MCF 10A (cell line): ENCODE measurements at regions of chr16 and their contacts with region 1.

Region 1: DNA sequence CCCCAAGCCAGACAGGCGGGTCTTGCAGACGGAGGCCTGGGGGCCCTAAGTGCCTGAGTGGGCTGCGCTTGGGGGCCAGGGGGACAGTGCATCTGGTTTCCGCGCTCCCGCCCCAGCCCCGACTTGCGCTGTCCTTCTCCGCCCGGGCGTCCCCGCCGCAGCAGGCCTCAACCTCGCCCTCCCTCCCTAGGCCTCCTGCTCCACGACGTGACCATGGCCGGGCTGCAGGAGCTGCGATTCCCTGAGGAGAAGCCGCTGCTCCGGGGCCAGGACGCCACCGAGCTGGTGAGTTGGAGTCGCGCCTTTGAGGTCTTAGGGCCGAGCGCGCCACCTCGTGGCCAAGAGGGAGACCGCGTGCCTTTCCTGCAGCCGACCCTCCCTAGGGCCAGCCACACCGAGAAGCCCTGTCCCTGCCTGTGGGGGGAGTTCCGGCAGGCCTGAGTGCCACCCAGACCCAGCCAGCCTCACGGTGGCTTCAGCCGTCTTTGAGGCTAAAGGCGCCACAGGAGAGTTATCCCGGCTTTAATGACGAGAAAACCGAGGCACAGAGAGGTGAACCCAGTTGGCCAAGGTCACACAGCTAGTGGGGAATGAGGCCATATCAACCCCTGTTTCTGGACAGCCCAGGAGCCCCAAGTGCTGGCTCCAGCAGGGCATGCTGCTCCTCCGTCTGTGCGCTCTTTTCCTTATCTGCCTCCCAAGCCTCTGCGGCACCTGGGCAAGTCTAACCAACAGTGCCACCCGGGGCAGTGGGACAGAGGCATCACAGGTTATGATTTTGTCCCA is 12.2 kb upstream of the NDRG4 start:
- DNase-seq: peak; percentile 77
- H3K4me3 Mint-ChIP-seq: no peak overlapping the region
- H3K27ac Mint-ChIP-seq: no peak overlapping the region
- H3K4me1 Mint-ChIP-seq: no peaks in the 10 kb centered on the region
- H3K27me3 Mint-ChIP-seq: no peaks in the 10 kb centered on the region
- CTCF ChIP-seq: peak; percentile 89

Region 2: GRCh38 chr16:58025351-58026138 is 462.2 kb before region 1 on chr16 and contains the start of gene MMP15:
- CTCF ChIA-PET with region 1: interaction called, 3 read pairs
- POLR2A ChIA-PET with region 1: no interaction called
- intact Hi-C with region 1: loop called (anchors 5 kb)
- DNase-seq: peak; percentile 71
- H3K4me3 Mint-ChIP-seq: peak within 1 kb of the TSS; percentile 56
- H3K27ac Mint-ChIP-seq: no peak within 1 kb of the TSS
- H3K4me1 Mint-ChIP-seq: peaks cover 13% of the 10 kb centered on the region
- H3K27me3 Mint-ChIP-seq: no peaks in the 10 kb centered on the region
- CTCF ChIP-seq: no peak
- total RNA-seq, gene MMP15: 1.3 and 1.7 TPM in 2 replicates

Region 3: GRCh38 chr16:58329147-58329546 is 158.6 kb before region 1 on chr16:
- CTCF ChIA-PET with region 1: interaction called, 170 read pairs
- POLR2A ChIA-PET with region 1: interaction called, 3 read pairs
- intact Hi-C with region 1: no loop called
- DNase-seq: peak; percentile 72
- H3K4me3 Mint-ChIP-seq: no peak overlapping the region
- H3K27ac Mint-ChIP-seq: no peak overlapping the region
- H3K4me1 Mint-ChIP-seq: no peaks in the 10 kb centered on the region
- H3K27me3 Mint-ChIP-seq: peaks cover 14% of the 10 kb centered on the region
- CTCF ChIP-seq: no peak

Region 4: DNA sequence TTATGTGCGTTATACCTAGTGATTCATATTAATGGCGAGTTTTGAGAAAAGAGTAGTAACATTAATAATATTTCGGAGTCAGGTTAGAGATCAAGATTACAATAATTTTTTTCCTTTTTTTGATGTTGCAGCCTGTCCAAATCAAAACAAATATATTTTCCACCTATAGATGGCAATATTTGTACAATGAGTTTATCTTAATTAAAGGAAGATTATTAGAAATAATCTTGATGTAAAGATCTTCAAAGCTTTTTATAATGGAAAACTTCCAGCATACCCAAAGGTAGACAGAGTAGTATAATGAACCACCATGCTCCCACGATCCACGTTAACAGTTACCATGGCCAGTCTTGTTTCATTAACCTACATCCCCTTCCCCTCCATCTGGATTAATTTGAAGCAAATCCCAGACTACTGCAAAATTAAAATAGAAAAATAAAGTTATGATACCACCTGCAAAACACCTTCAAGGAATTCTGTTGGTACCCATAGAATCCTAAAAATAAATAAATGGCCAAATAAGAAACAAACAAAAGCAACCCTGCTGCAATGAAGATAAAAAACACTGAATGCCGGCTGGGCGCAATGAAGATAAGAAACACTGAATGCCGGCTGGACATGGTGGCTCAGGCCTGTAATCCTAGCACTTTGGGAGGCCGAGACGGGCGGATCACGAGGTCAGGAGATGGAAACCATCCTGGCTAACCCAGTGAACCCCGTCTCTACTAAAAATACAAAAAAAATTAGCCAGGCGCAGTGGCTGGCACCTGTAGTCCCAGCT is 142.0 kb before region 1 on chr16:
- CTCF ChIA-PET with region 1: interaction called, 72 read pairs
- POLR2A ChIA-PET with region 1: no interaction called
- intact Hi-C with region 1: loop called (anchors 1 kb)
- DNase-seq: no peak
- H3K4me3 Mint-ChIP-seq: no peak overlapping the region
- H3K27ac Mint-ChIP-seq: no peak overlapping the region
- H3K4me1 Mint-ChIP-seq: no peaks in the 10 kb centered on the region
- H3K27me3 Mint-ChIP-seq: peaks cover 48% of the 10 kb centered on the region
- CTCF ChIP-seq: peak; percentile 24

Region 5: GRCh38 chr16:58352690-58353089 is 135.1 kb before region 1 on chr16:
- CTCF ChIA-PET with region 1: interaction called, 48 read pairs
- POLR2A ChIA-PET with region 1: no interaction called
- intact Hi-C with region 1: no loop called
- DNase-seq: no peak
- H3K4me3 Mint-ChIP-seq: no peak overlapping the region
- H3K27ac Mint-ChIP-seq: no peak overlapping the region
- H3K4me1 Mint-ChIP-seq: no peaks in the 10 kb centered on the region
- H3K27me3 Mint-ChIP-seq: peaks cover 60% of the 10 kb centered on the region
- CTCF ChIP-seq: no peak

Region 6: DNA sequence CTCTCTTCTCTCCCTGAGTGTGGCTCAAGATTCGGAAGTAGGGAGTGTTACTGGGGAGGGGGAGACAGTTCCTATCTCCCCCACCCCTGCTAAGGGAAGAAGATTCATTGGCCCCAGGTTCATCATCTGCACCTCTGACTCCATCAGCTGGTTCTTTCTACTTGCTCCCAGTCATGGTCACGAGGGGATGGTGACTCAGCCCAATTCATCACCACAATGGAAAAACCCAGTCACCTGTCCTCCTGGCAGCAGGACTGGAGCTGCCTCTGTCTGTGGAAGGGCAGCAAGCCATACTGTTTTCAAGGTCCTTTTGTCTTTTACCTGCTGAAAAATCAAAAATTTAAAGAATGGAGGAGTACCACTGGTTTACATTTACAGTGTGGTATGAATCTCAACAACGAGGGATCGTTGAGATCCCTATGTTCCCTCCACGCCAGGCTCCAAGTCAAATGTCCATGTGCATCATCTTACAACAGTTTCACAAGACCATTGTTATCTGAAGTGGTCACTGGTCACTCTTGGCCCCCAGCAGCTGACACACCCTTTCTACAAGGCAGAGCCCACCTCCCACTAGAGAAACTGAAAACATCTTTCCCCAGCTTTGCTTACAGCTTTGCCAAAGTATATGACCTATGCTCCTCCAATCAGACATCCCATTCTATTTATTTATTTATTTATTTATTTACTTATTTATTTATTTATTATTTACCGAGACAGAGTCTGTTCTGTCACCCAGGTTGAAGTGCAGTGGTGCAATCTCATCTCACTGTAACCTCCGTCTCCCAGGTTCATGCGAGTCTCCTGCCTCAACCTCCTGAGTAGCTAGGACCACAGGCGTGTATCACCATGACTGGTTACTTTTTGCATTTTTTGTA is 28.2 kb before region 1 on chr16:
- CTCF ChIA-PET with region 1: no interaction called
- POLR2A ChIA-PET with region 1: no interaction called
- intact Hi-C with region 1: no loop called
- DNase-seq: peak; percentile 56
- H3K4me3 Mint-ChIP-seq: no peak overlapping the region
- H3K27ac Mint-ChIP-seq: peak overlapping the region; percentile 23
- H3K4me1 Mint-ChIP-seq: peaks cover 10% of the 10 kb centered on the region
- H3K27me3 Mint-ChIP-seq: peaks cover 8% of the 10 kb centered on the region
- CTCF ChIP-seq: no peak

Region 7: GRCh38 chr16:58471321-58471975 is 16.3 kb before region 1 on chr16:
- CTCF ChIA-PET with region 1: interaction called, 25 read pairs
- POLR2A ChIA-PET with region 1: interaction called, 3 read pairs
- intact Hi-C with region 1: no loop called
- DNase-seq: no peak
- H3K4me3 Mint-ChIP-seq: no peak overlapping the region
- H3K27ac Mint-ChIP-seq: no peak overlapping the region
- H3K4me1 Mint-ChIP-seq: no peaks in the 10 kb centered on the region
- H3K27me3 Mint-ChIP-seq: peaks cover 19% of the 10 kb centered on the region
- CTCF ChIP-seq: no peak

Region 8: GRCh38 chr16:58476791-58477190 is 11.0 kb before region 1 on chr16:
- CTCF ChIA-PET with region 1: interaction called, 25 read pairs
- POLR2A ChIA-PET with region 1: interaction called, 3 read pairs
- intact Hi-C with region 1: no loop called
- DNase-seq: no peak
- H3K4me3 Mint-ChIP-seq: no peak overlapping the region
- H3K27ac Mint-ChIP-seq: no peak overlapping the region
- H3K4me1 Mint-ChIP-seq: no peaks in the 10 kb centered on the region
- H3K27me3 Mint-ChIP-seq: peaks cover 29% of the 10 kb centered on the region
- CTCF ChIP-seq: no peak

Region 9: GRCh38 chr16:58533751-58534470 is 46.2 kb after region 1 on chr16:
- CTCF ChIA-PET with region 1: no interaction called
- POLR2A ChIA-PET with region 1: no interaction called
- intact Hi-C with region 1: no loop called
- DNase-seq: no peak
- H3K4me3 Mint-ChIP-seq: no peak overlapping the region
- H3K27ac Mint-ChIP-seq: no peak overlapping the region
- H3K4me1 Mint-ChIP-seq: no peaks in the 10 kb centered on the region
- H3K27me3 Mint-ChIP-seq: no peaks in the 10 kb centered on the region
- CTCF ChIP-seq: no peak

Region 10: GRCh38 chr16:58551496-58551895 is 63.7 kb after region 1 on chr16:
- CTCF ChIA-PET with region 1: no interaction called
- POLR2A ChIA-PET with region 1: no interaction called
- intact Hi-C with region 1: no loop called
- DNase-seq: no peak
- H3K4me3 Mint-ChIP-seq: no peak overlapping the region
- H3K27ac Mint-ChIP-seq: peak overlapping the region; percentile 12
- H3K4me1 Mint-ChIP-seq: no peaks in the 10 kb centered on the region
- H3K27me3 Mint-ChIP-seq: no peaks in the 10 kb centered on the region
- CTCF ChIP-seq: no peak

Region 11: DNA sequence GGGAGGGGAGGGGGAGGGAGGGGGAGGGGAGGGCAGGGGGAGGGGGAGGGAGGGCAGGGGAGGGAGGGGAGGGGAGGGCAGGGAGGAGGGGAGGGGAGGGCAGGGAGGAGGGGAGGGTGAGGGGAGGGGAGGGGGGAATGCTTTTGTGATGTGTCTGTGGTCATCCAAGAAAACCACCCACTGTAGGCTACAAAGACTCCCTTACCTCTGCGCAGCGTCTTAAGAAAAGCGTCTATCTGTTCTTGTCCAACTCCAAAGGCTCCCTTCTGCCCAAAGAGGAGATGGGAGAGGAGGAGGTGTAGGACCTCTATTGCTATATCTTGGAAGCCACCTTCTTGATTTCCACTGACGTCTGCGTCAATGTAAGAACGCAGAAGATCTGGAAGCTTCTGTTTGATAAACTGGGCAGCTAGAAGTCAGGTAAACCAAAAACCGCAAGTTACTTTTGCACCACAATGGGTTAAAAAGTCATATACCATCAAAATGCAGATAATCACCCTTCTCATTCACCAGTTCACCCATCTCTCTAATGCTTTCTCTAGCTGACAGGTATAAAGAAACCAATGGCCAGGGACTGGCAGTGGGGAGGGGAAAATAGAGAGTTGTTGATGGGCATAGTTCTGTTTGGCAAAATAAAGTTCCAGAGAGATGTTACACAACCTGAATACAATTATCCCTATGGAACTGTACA is 98.7 kb after region 1 on chr16:
- CTCF ChIA-PET with region 1: no interaction called
- POLR2A ChIA-PET with region 1: no interaction called
- intact Hi-C with region 1: no loop called
- DNase-seq: no peak
- H3K4me3 Mint-ChIP-seq: no peak overlapping the region
- H3K27ac Mint-ChIP-seq: no peak overlapping the region
- H3K4me1 Mint-ChIP-seq: no peaks in the 10 kb centered on the region
- H3K27me3 Mint-ChIP-seq: no peaks in the 10 kb centered on the region
- CTCF ChIP-seq: no peak